Right ventricle myocardium inferior (tissue), 1 donor: ENCODE measurements at regions of chr3 and their contacts with region 1.

Region 1: GRCh38 chr3:177197041-177197727 is at the start of gene TBL1XR1:
- DNase-seq: peak; percentile 93
- ATAC-seq: peak; percentile 93
- total RNA-seq, gene TBL1XR1: 96.8 TPM

Region 2: DNA sequence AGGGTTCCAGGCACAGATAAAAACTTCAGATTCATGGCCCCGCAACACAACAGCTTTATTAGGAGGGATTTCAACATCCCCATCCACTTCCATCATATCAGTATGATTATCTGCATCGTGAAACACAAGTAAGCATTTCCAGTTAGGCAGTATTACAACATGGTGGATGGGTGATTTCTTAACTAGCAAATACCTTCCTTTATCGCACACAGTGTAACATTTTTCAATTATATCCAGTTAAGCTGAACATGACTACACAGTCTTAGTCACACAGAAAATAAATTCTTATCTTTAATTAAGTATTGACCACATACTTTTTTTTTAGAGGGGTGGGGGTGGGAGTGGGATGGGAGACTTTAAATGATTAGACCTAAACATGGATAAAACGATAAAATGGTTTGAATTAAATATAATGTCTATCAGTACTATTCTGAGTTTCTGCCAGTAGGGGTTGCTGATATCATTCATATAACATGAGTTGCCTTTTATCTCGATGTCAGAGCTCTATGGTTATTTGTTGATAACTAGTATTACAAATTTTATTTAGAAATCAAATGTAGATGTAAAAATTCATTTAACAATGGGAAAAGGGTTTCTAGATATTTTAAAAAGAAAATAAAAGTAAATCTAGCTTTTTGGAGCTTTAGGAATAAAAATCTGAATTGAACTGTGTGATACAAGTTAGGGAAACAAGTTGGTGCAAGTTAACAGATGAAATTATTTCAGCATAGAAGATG is 146.5 kb before region 1 on chr3:
- intact Hi-C with region 1: loop called (anchors 2 kb)
- DNase-seq: no peak
- ATAC-seq: peak; percentile 70

Region 3: GRCh38 chr3:177294221-177294620 is 97.0 kb after region 1 on chr3:
- intact Hi-C with region 1: loop called (anchors 5 kb)
- DNase-seq: no peak
- ATAC-seq: peak; percentile 92

Region 4: DNA sequence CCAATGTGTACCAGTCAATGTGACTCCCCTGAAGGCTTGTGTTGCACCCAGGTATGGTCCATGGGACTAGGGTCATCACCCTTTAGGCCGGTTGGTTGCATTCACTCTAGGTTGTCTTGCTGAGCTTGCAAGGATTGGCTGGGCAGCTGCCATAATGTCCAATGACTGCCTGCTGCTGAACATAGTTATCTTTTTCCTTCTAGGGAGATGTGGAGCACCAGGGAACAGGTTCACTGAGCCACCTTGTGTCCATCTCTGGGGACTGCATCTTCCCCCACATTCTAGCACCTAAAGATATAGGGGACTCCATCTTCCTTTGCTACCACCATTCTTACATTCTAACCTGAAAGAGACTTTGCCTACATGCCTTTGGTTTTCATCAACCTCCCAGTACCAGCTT is 580.5 kb after region 1 on chr3:
- intact Hi-C with region 1: loop called (anchors 5 kb)
- DNase-seq: peak; percentile 43
- ATAC-seq: no peak

Region 5: GRCh38 chr3:178325330-178325729 is 1128.1 kb after region 1 on chr3:
- intact Hi-C with region 1: loop called (anchors 10 kb)
- DNase-seq: no peak
- ATAC-seq: no peak